Esophagus muscularis mucosa (tissue), 4 donors: ENCODE measurements at regions of chr5 and their contacts with region 1.

Region 1: DNA sequence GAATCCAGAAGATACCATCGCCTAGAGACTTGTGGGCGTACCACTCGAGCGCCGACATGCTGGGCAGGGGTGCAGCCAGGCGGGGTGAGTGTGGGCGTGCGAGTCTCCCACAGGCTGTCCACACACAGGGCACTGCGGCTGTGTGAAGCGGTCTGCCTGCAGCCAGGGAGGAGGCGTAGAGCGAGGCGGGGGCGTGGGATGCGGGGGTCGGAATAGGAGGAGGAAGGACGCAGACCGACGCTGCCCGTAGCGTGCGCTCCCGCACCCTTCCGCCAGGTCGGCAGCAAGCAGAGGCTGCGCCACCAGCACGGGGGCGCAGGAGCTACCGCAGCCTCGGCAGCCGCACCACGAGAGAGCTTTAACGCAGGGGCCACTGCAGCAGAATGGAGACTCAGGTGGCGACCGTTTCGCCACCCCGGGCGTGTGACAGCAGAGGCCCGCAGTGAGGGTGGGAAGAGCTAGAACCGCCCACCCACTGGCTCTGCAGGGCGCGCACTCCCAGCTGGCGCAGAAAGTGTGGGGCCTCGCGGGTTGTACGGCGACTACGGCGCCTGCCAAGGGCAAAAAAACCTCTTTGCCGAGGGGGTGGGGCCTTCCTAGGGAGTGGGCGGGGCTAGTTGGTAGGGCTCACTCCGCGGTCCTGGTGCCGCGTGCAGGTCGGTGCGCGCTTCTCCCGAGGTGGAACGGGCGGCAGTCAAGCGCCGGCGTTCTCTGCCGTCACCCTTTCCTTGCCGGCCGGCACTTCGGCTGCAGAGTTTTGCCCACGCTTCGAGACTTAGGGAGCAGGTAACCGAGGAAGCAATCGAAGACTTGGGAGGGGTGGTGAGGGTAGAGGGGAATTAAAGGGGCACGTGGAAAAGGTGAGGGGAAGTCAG is at the starts of genes MBLAC2 and POLR3G:
- DNase-seq: peak; percentile 96
- H3K4me3 ChIP-seq: peak within 1 kb of the TSS; percentile 74 to 94 (median 78)
- H3K27ac ChIP-seq: peak within 1 kb of the TSS; percentile 65 to 81 (median 79)
- H3K4me1 ChIP-seq: peaks cover 10 to 30% (median 30%) of the 10 kb centered on the region in 4 donors
- H3K27me3 ChIP-seq: no peaks in the 10 kb centered on the region
- CTCF ChIP-seq: peak in 2 of 3 experiments; percentile 39 to 60
- EP300 ChIP-seq: no peak
- POLR2A ChIP-seq: peak; percentile 24
- total RNA-seq, gene MBLAC2: 2.2 to 5.6 (median 4.6) TPM
- total RNA-seq, gene POLR3G: 0.42 to 2.5 (median 1.4) TPM

Region 2: DNA sequence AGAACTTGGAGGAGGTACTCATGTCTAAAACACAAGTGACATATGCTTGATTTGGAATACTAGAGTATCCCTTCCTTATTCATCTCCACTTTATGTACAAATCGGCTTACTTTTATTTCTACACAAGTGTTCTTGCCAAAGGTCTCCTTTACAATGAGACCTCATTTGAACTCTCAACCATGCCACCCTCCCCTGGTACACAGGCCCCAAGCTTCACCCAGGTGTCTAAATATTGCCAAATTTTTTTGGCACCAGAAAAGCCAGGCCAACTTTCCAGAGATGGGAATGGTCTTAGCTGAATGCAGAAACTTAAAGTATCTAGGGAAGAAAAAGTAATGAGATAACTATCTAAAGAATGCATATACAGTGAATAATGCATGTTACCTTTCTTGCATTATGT is 36.0 kb after region 1 on chr5:
- intact Hi-C with region 1: loop called (anchors 5 kb)
- DNase-seq: no peak
- H3K4me3 ChIP-seq: no peak overlapping the region
- H3K27ac ChIP-seq: no peak overlapping the region
- H3K4me1 ChIP-seq: no peaks in the 10 kb centered on the region
- H3K27me3 ChIP-seq: no peaks in the 10 kb centered on the region
- CTCF ChIP-seq: no peak
- EP300 ChIP-seq: no peak
- POLR2A ChIP-seq: no peak